ENCODE measurements at regions of chr9 and their contacts with region 1.

Region 1: GRCh38 chr9:130417602-130418001 is 27.2 kb upstream of the ASS1 start:
- DNase-seq: peak in 1 of 2 experiments; percentile 32
- H3K4me3 ChIP-seq: no peak overlapping the region
- H3K27ac ChIP-seq: no peak overlapping the region
- H3K4me1 ChIP-seq: peaks cover 15% of the 10 kb centered on the region
- H3K27me3 ChIP-seq: no peaks in the 10 kb centered on the region
- CTCF ChIP-seq: 0 out of 2 replicates have a peak, but pooled peaks have one; percentile 29

Region 2: DNA sequence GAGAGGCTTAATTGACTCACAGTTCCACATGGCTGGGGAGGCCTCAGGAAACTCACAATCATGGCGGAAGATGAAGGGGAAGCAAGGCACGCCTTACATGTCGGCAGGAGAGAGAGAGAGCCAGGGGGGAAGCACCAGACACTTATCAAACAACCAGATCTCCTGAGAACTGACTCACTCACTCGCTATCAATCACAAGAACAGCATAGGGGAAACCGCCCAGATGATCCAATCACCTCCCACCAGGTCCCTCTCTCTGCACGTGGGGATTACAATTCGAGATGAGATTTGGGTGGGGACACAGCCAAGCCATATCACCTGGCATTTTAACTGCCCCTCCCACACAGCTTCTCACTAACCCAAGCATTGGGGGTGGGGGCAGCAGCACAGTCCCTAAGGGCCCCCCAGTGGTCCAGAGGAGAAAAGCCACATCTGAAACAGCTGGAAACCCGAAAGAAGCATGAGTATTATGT is 48.9 kb before region 1 on chr9:
- CTCF ChIA-PET with region 1: interaction called, 3 read pairs
- POLR2A ChIA-PET with region 1: no interaction called
- intact Hi-C with region 1: loop called (anchors 5 kb)
- DNase-seq: peak; percentile 60 to 76
- H3K4me3 ChIP-seq: no peak overlapping the region
- H3K27ac ChIP-seq: no peak overlapping the region
- H3K4me1 ChIP-seq: peaks cover 33% of the 10 kb centered on the region
- H3K27me3 ChIP-seq: no peaks in the 10 kb centered on the region
- CTCF ChIP-seq: 0 out of 2 replicates have a peak, but pooled peaks have one; percentile 26

Measured in PC-9 (cell line).